Calu3 (cell line): ENCODE measurements at regions of chr7 and their contacts with region 1.

Region 1: DNA sequence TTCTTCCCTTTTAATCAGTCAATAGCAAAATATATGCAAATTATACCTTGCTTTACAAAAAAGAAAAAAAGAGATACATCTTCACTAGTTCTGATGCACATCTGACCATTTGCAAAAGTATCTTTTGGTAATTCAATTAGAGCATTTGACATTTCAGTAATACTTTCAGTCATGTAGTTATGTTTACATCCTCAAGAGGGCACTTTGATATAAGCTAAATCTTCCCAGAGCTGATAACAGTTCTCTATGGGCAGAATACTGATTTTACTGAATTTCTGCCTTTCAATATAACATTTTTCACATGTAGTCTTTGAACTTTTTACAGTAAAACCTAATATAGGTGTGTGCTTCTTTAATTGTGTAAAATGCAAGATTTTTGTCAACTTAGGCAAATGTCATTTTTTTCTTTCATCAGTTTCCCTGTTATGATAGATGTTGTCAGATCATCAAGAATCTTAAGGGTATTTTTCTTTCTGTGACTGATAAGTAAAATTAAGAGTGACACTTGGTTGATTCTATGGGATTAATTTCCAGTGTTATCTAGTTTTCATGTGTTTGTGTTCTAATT is 703.5 kb upstream of the SEMA3D start:
- DNase-seq: no peak
- H3K4me3 Mint-ChIP-seq: no peak overlapping the region
- H3K27ac Mint-ChIP-seq: no peak overlapping the region
- H3K4me1 Mint-ChIP-seq: no peaks in the 10 kb centered on the region
- H3K27me3 Mint-ChIP-seq: no peaks in the 10 kb centered on the region
- CTCF ChIP-seq: no peak

Region 2: GRCh38 chr7:86469680-86470295 is 579.5 kb after region 1 on chr7:
- CTCF ChIA-PET with region 1: interaction called, 8 read pairs
- intact Hi-C with region 1: loop called (anchors 1 kb)
- DNase-seq: peak; percentile 58
- H3K4me3 Mint-ChIP-seq: no peak overlapping the region
- H3K27ac Mint-ChIP-seq: no peak overlapping the region
- H3K4me1 Mint-ChIP-seq: no peaks in the 10 kb centered on the region
- H3K27me3 Mint-ChIP-seq: no peaks in the 10 kb centered on the region
- CTCF ChIP-seq: peak; percentile 60

Region 3: DNA sequence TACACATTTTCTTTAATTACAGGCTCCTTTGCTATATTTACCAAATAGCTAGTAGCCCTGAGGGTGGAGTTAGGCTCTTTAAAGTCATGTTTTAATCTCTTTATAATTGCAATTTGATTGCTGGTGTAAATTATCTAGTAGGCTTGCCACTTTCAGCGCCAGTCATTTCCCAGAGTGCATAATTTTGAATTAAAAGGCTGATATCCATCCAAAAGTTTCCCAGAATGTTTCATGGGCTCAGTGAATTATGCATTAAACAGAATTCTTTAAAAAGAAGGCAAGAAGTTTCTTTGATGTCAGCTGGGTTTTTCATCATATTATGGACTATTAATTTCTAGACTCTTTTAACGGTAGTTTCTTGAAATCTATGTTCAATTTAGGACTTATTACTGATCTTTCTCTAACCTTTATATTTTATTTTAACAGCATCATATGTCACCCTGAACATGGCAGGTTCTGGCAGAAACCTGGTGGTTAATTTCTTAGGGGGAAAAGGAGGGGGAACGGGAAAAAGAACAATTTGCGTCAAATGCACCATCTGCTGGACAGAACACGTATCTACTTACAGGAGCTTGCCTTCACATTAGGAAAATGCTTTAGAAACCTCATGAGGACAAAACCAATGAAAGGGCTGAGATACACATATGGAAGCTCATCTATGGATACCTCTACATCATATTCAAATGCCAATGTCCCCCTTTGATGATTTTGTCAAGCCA is 924.5 kb after region 1 on chr7:
- CTCF ChIA-PET with region 1: no interaction called
- intact Hi-C with region 1: loop called (anchors 5 kb)
- DNase-seq: peak; percentile 1
- H3K4me3 Mint-ChIP-seq: no peak overlapping the region
- H3K27ac Mint-ChIP-seq: no peak overlapping the region
- H3K4me1 Mint-ChIP-seq: peaks cover 9% of the 10 kb centered on the region
- H3K27me3 Mint-ChIP-seq: no peaks in the 10 kb centered on the region
- CTCF ChIP-seq: no peak